Endothelial cell of umbilical vein (primary cell): ENCODE measurements at regions of chr22 and their contacts with region 1.

Region 1: GRCh38 chr22:37643225-37643847 is 3.9 kb downstream of the SH3BP1 start:
- DNase-seq: peak; percentile 70
- H3K4me3 ChIP-seq: no peak overlapping the region
- H3K27ac ChIP-seq: no peak overlapping the region
- H3K4me1 ChIP-seq: peaks cover 2% of the 10 kb centered on the region
- H3K27me3 ChIP-seq: no peaks in the 10 kb centered on the region
- CTCF ChIP-seq: peak; percentile 84 to 95
- POLR2A ChIP-seq: no peak

Region 2: DNA sequence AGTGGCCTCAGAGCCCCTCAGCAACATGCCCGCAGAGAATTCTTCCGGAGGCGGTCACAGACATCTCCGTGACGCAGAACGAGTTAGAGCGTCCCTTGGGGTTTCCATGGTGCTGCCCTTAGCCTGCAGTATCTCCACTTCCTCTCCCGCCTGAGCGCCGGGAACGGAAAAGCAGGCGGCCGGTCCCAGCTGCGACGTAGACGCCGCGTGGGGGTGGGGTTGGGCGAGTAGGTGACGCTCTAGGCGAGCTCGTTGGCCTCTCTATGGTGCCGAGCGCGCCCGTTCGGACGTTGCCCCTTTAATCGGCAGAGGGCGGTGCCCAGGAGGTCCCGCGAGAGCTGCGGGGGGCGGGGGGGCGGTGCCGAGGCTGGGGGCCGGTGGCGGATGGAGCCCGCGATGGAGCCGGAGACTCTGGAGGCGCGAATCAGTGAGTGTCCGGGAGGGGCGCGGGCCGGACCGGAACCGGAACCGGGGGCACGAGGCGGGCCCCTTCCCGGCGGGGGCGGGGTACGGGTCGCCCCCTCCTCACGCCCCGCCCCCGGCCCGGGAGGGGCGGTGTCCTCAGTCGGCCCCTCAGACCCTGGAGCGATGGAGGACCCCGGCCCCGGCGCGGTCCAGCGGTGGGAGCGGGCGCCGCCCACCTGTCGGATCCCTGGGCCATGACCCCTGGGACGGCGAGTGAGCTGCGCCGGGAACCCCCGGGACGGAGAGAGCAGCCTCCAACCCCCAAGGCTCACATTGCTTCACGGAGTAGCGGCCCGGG is 34.7 kb before region 1 on chr22 and contains the start of gene GGA1:
- CTCF ChIA-PET with region 1: interaction called, 29 read pairs
- POLR2A ChIA-PET with region 1: no interaction called
- dilution Hi-C with region 1: no loop called
- intact Hi-C with region 1: no loop called
- DNase-seq: peak; percentile 99
- H3K4me3 ChIP-seq: peak within 1 kb of the TSS; percentile 46 to 83 (median 73)
- H3K27ac ChIP-seq: peak within 1 kb of the TSS; percentile 79
- H3K4me1 ChIP-seq: peaks cover 19% of the 10 kb centered on the region
- H3K27me3 ChIP-seq: peaks cover 0 to 7% of the 10 kb centered on the region in 2 experiments
- CTCF ChIP-seq: no peak
- POLR2A ChIP-seq: no peak
- total RNA-seq, gene GGA1: 55.9 and 67.5 TPM in 2 replicates

Region 3: GRCh38 chr22:37658133-37659065 is 15.1 kb after region 1 on chr22 and contains the start of gene PDXP:
- CTCF ChIA-PET with region 1: interaction called, 110 read pairs
- POLR2A ChIA-PET with region 1: interaction called, 4 read pairs
- dilution Hi-C with region 1: no loop called
- intact Hi-C with region 1: loop called (anchors 1 kb)
- DNase-seq: peak; percentile 100
- H3K4me3 ChIP-seq: peak within 1 kb of the TSS; percentile 18 to 85 (median 54)
- H3K27ac ChIP-seq: peak within 1 kb of the TSS; percentile 7
- H3K4me1 ChIP-seq: peaks cover 17% of the 10 kb centered on the region
- H3K27me3 ChIP-seq: no peaks in the 10 kb centered on the region
- CTCF ChIP-seq: no peak
- POLR2A ChIP-seq: peak; percentile 73
- total RNA-seq, gene PDXP: 14.8 and 18.0 TPM in 2 replicates

Region 4: GRCh38 chr22:37686002-37686982 is 43.0 kb after region 1 on chr22 and contains the start of gene NOL12:
- CTCF ChIA-PET with region 1: interaction called, 307 read pairs
- POLR2A ChIA-PET with region 1: interaction called, 5 read pairs
- dilution Hi-C with region 1: no loop called
- intact Hi-C with region 1: loop called (anchors 1 kb)
- DNase-seq: peak; percentile 92
- H3K4me3 ChIP-seq: peak within 1 kb of the TSS; percentile 44 to 99 (median 82)
- H3K27ac ChIP-seq: peak within 1 kb of the TSS; percentile 74
- H3K4me1 ChIP-seq: peaks cover 5% of the 10 kb centered on the region
- H3K27me3 ChIP-seq: no peaks in the 10 kb centered on the region
- CTCF ChIP-seq: no peak
- POLR2A ChIP-seq: peak; percentile 90
- total RNA-seq, gene NOL12: 29.1 and 31.5 TPM in 2 replicates

Region 5: DNA sequence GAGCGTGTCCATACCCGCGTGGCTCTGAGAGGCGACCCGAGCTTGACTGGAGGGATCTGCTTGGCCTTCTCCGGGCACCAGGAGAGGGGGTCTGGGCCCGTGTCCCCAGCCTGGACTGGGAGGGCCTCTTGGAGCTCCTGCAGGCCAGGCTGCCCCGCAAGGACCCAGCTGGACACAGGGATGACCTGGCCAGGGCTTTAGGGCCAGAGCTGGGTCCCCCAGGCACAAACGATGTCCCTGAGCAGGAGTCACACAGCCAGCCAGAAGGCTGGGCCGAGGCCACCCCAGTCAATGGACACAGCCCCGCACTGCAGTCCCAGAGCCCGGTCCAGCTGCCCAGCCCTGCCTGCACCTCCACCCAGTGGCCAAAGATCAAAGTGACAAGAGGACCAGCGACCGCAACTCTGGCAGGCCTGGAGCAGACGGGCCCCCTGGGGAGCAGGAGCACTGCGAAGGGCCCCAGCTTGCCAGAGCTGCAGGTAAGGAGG is 91.7 kb after region 1 on chr22:
- CTCF ChIA-PET with region 1: interaction called, 48 read pairs
- POLR2A ChIA-PET with region 1: no interaction called
- dilution Hi-C with region 1: no loop called
- intact Hi-C with region 1: loop called (anchors 1 kb)
- DNase-seq: no peak
- H3K4me3 ChIP-seq: no peak overlapping the region
- H3K27ac ChIP-seq: no peak overlapping the region
- H3K4me1 ChIP-seq: no peaks in the 10 kb centered on the region
- H3K27me3 ChIP-seq: no peaks in the 10 kb centered on the region
- CTCF ChIP-seq: peak; percentile 24 to 57
- POLR2A ChIP-seq: no peak

Region 6: GRCh38 chr22:37792494-37792893 is 149.2 kb after region 1 on chr22:
- CTCF ChIA-PET with region 1: interaction called, 61 read pairs
- POLR2A ChIA-PET with region 1: no interaction called
- dilution Hi-C with region 1: no loop called
- intact Hi-C with region 1: loop called (anchors 1 kb)
- DNase-seq: no peak
- H3K4me3 ChIP-seq: no peak overlapping the region
- H3K27ac ChIP-seq: no peak overlapping the region
- H3K4me1 ChIP-seq: no peaks in the 10 kb centered on the region
- H3K27me3 ChIP-seq: no peaks in the 10 kb centered on the region
- CTCF ChIP-seq: no peak
- POLR2A ChIP-seq: no peak